ENCODE measurements at regions of chr1 and their contacts with region 1.

Region 1: GRCh38 chr1:15409388-15410222 is at the start of gene EFHD2:
- DNase-seq: peak; percentile 80 to 94 (median 86)
- ATAC-seq: peak; percentile 78 to 91 (median 82)
- H3K4me3 ChIP-seq: peak within 1 kb of the TSS; percentile 82 to 93 (median 89)
- H3K27ac ChIP-seq: peak within 1 kb of the TSS; percentile 50 to 68 (median 62)
- H3K4me1 ChIP-seq: peaks cover 0 to 9% (median 8%) of the 10 kb centered on the region in 3 donors
- H3K27me3 ChIP-seq: no peaks in the 10 kb centered on the region
- CTCF ChIP-seq: no peak
- total RNA-seq, gene EFHD2: 35.9 to 43.6 (median 38.8) TPM

Region 2: DNA sequence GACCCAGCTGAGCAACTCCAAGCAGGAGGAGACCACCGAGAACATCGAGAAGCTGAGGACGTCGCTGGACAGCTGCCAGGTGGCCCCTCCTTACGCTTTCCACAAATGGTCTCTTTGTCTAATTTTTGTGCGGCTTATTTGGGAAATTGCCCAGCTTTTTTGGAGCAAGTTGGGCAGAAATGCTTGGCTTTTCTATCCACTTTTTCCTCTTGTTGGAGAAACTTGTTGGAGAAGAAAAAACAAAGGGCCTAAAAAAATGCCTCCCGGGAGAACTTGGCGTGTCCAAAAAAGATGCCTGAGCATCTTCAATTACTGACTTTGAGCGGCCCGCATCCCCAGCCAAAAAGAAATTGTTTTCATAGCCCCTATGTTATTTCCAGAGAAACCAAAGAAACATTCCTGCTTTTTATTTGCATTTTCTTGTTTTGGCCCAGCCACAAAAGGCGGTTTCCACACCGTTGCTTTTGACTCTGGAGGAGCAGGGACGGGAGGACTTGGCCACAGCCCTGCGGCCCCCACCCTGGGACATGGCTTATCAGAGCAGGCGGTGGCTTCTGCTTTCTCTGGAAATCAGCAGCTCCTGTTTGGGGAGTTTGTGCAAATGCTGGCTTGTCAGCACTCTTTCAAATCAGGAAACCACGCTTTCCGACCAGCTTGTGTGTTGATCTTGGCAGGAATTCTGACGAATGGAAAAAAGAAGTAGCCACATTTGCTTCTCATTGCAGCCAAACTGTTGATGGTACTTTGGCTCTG is 81.1 kb before region 1 on chr1:
- intact Hi-C with region 1: loop called in 1 of 3 experiments (anchors 5 kb)
- DNase-seq: peak in 3 of 6 donors; percentile 60 to 83 (median 73)
- ATAC-seq: peak; percentile 67 to 83 (median 82)
- H3K4me3 ChIP-seq: no peak overlapping the region
- H3K27ac ChIP-seq: peak overlapping the region; percentile 49 to 67 (median 58)
- H3K4me1 ChIP-seq: peaks cover 10 to 16% (median 15%) of the 10 kb centered on the region in 3 donors
- H3K27me3 ChIP-seq: no peaks in the 10 kb centered on the region
- CTCF ChIP-seq: no peak

Measured in pancreas (tissue), 10 donors.